Calu3 (cell line): ENCODE measurements at regions of chr13 and their contacts with region 1.

Region 1: DNA sequence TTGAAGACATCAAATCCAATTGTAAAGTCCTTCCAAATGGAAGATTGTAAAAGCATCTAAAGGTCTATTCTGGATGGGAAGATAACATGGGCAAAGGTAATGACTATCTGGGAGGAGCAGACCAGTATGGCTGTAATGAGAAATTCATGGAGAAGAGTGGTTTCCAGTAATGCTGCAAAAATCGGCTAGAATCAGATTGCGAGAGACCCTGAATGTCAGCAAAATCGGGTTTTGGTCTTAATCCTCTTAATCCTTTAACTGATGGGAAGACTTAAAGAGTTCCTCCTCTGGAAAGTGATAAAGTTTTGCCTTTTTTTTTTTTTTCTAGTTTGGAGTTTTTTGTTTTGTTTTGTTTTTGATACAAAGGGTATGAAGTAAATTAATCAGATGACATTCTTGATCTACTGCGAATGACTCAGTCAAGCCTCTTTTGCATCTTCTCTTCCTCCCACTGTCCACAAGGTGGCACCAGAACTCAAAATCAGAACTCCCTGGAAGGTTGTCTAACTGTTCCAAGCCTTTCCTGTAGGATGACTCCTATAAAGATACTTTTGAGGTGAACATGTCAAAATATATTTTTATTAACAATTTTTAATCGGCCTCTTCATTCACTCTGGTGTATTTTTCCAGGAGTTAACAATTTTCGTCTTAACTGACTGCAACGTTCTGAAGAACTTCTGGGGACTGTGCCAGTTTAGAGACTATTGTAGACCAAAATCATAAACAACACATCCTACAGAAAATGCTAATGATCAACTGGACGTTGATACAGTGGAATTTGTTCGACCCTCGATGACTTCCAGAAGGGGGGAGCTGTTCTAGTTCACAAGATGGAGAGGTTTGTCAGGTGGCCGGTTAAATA is 213.3 kb upstream of the MIR17HG start:
- DNase-seq: peak; percentile 37
- H3K4me3 Mint-ChIP-seq: no peak overlapping the region
- H3K27ac Mint-ChIP-seq: no peak overlapping the region
- H3K4me1 Mint-ChIP-seq: no peaks in the 10 kb centered on the region
- H3K27me3 Mint-ChIP-seq: no peaks in the 10 kb centered on the region
- CTCF ChIP-seq: no peak

Region 2: DNA sequence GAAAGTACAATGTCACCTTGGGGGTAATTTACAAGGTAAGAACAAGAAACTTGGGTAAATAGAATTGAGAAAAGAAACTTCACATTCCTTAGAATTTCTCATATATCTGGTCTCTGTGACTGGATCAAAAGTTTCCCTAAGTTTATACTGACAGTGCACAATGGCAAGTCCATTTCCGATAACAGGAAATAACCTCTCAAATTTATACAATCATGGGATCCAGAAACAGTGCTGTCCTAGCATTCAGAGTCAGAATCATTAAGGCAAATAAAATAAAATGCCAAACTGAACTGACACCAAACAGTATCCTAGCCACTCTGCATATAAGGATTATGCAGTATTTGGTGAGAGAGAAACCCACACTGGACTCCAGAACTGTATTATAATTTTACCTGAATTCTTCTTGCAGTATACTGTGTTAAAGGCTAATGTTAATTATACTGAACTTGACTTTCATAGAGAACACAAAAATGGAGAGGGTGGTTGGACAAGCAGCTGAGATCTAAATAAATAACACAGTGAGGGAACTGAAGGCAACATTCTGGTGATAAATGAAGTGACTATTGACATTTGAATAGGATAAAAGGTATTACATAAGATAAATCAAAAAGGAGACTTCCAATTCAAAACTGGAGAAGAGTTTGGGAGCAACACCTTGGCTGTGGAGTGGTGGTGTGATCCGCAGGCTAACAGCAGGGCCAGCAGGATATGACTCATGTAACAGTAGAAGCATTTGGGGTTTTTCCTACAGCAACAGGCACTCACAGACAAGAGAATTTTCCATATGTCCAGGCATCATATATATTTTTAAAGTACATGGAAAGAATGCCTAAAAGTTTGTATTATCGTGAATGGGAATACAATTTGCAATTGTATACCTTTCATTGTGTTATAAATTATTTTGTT is 719.2 kb before region 1 on chr13:
- CTCF ChIA-PET with region 1: no interaction called
- intact Hi-C with region 1: no loop called
- DNase-seq: no peak
- H3K4me3 Mint-ChIP-seq: no peak overlapping the region
- H3K27ac Mint-ChIP-seq: no peak overlapping the region
- H3K4me1 Mint-ChIP-seq: no peaks in the 10 kb centered on the region
- H3K27me3 Mint-ChIP-seq: no peaks in the 10 kb centered on the region
- CTCF ChIP-seq: no peak

Region 3: GRCh38 chr13:91154558-91155353 is 20.6 kb after region 1 on chr13:
- CTCF ChIA-PET with region 1: interaction called, 4 read pairs
- intact Hi-C with region 1: loop called (anchors 1 kb)
- DNase-seq: no peak
- H3K4me3 Mint-ChIP-seq: peak overlapping the region; percentile 50
- H3K27ac Mint-ChIP-seq: peak overlapping the region; percentile 79
- H3K4me1 Mint-ChIP-seq: peaks cover 9% of the 10 kb centered on the region
- H3K27me3 Mint-ChIP-seq: no peaks in the 10 kb centered on the region
- CTCF ChIP-seq: no peak

Region 4: DNA sequence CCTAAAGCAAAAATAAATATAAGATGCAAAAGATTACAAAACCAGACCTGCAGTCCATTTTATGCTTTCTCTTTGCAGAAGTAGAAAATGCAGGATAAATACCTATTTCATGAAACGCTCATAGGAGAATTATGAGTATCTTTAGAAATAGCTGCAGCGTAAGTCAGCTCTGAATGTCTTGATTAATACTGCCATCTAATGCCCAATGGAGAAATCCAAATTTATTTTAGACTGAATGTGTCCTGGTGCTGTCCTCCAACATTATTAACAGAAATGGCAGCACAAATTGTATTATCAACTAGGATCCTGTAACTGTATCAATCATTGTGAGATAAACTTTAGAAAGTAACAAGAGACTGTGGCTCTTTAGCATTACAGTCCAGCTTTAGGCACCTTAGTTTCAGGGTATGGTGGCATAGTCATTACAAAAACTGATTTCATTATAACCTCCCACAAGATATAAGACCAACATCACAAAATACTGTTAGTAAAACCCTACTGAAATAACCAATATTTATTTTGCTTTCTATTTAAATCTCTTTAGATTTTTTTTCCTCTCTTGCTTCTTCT is 51.2 kb after region 1 on chr13:
- CTCF ChIA-PET with region 1: no interaction called
- intact Hi-C with region 1: loop called (anchors 1 kb)
- DNase-seq: no peak
- H3K4me3 Mint-ChIP-seq: no peak overlapping the region
- H3K27ac Mint-ChIP-seq: no peak overlapping the region
- H3K4me1 Mint-ChIP-seq: no peaks in the 10 kb centered on the region
- H3K27me3 Mint-ChIP-seq: no peaks in the 10 kb centered on the region
- CTCF ChIP-seq: no peak

Region 5: DNA sequence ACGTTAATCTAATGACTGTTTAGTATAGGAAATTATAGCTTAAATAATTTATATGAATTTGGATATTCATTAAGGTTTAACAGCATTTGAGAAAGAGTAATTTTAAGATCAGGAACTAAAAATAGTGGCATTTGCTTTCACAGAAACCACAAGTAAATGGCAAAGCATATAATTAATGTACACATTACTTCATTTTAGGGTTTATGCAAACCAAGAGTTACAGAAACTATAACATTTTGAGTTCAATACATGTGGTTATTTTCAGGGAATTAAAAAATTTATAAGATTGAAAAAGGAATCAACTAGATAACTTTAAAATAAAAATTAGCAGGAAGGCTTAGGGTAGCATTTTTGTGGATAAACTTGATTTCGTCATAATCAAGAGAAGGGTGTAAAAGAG is 61.6 kb after region 1 on chr13:
- CTCF ChIA-PET with region 1: no interaction called
- intact Hi-C with region 1: no loop called
- DNase-seq: no peak
- H3K4me3 Mint-ChIP-seq: no peak overlapping the region
- H3K27ac Mint-ChIP-seq: no peak overlapping the region
- H3K4me1 Mint-ChIP-seq: no peaks in the 10 kb centered on the region
- H3K27me3 Mint-ChIP-seq: no peaks in the 10 kb centered on the region
- CTCF ChIP-seq: no peak

Region 6: DNA sequence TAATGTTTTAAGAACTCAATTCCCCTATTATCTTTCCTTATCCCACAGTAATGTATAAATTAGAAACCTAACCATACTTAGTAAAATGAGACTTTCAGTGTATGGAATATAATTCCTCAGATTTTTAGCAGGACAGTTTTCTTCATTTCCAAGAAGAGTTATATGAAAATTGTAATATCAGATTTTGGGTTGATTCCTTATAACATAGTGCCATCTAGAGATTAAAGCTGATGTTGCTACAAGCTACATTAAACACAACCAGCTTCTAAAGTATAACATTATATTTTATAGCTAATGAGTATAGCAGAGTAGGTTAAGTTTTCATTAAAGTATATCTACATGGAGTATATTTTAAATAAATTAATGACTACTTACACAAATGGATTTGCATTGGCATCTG is 113.6 kb after region 1 on chr13:
- CTCF ChIA-PET with region 1: interaction called, 4 read pairs
- intact Hi-C with region 1: loop called (anchors 10 kb)
- DNase-seq: no peak
- H3K4me3 Mint-ChIP-seq: no peak overlapping the region
- H3K27ac Mint-ChIP-seq: no peak overlapping the region
- H3K4me1 Mint-ChIP-seq: no peaks in the 10 kb centered on the region
- H3K27me3 Mint-ChIP-seq: no peaks in the 10 kb centered on the region
- CTCF ChIP-seq: no peak